Mammary epithelial cell (primary cell): ENCODE measurements at regions of chr6 and their contacts with region 1.

Region 1: GRCh38 chr6:40819182-40819834 is 219.7 kb downstream of the UNC5CL start:
- DNase-seq: no peak
- H3K4me3 ChIP-seq: no peak overlapping the region
- H3K27ac ChIP-seq: no peak overlapping the region
- H3K4me1 ChIP-seq: no peaks in the 10 kb centered on the region
- H3K27me3 ChIP-seq: no peaks in the 10 kb centered on the region
- CTCF ChIP-seq: no peak

Region 2: DNA sequence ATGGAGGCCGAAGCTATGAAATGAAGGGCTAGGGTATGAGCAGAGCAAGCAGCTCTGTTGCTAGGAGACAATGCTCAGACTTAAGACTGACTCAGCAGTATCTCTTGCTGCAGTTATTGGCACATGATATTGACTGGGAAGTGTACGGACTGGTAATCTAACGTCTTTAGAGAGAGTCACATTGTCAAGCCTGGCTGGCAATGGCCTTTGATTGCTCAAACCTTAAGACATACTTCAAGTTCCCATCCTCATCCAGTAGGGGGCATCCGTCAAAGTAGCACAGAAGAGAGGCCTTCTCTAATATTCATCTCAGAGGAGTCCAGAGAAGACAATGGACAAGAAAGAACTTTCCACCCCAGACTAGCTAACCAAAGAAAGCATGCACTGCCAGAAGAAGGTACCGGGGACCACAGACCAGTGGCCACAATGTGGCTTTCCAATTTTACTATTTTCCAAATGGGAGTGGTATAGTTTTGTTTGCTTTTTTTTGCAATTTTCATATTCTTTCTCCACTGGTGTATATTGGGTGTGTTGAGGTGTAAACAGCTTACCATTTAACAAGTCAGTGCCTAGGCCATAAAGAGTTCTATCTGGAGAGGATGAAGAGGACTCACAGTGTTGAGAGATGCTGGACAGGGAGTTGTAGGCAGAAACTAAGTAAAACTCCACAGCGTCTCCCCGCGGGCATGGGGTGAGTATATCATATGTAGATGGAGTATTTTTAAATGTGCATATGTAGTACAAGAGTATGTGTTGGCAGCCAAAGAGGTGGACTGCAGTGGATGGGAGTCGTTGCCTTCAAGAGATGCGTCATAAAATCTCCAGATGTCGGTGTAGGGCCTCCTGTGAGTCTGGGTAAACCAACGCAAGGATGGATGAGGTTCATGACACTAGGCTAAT is 268.9 kb before region 1 on chr6:
- CTCF ChIA-PET with region 1: no interaction called
- dilution Hi-C with region 1: no loop called
- in situ Hi-C with region 1: no loop called
- intact Hi-C with region 1: loop called (anchors 1 kb)
- DNase-seq: peak; percentile 19
- H3K4me3 ChIP-seq: no peak overlapping the region
- H3K27ac ChIP-seq: no peak overlapping the region
- H3K4me1 ChIP-seq: no peaks in the 10 kb centered on the region
- H3K27me3 ChIP-seq: no peaks in the 10 kb centered on the region
- CTCF ChIP-seq: peak; percentile 72 to 77

Region 3: DNA sequence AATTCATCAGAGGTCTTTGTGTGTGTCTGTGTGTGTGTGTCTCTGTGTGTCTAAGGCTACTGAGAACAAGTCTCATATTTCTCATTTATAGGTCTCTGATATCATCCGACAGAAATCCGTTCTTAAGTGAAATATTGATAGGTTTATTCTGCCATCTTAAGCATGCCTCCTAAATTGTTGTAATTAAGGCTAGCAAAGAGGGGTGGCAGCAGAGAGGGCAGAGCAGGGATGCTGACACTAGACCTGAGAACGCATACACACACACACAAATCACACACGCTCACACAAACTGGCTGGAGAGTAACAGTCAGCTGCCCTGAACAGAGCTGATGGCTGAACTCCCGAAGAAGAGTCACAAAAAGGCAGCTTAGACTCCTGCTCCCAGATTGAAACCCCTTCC is 147.2 kb before region 1 on chr6:
- CTCF ChIA-PET with region 1: no interaction called
- dilution Hi-C with region 1: no loop called
- in situ Hi-C with region 1: no loop called
- intact Hi-C with region 1: loop called (anchors 10 kb)
- DNase-seq: no peak
- H3K4me3 ChIP-seq: no peak overlapping the region
- H3K27ac ChIP-seq: no peak overlapping the region
- H3K4me1 ChIP-seq: no peaks in the 10 kb centered on the region
- H3K27me3 ChIP-seq: no peaks in the 10 kb centered on the region
- CTCF ChIP-seq: peak in 1 of 2 donors; percentile 12

Region 4: GRCh38 chr6:40719671-40720374 is 99.5 kb before region 1 on chr6:
- CTCF ChIA-PET with region 1: no interaction called
- dilution Hi-C with region 1: no loop called
- in situ Hi-C with region 1: no loop called
- intact Hi-C with region 1: loop called (anchors 10 kb)
- DNase-seq: no peak
- H3K4me3 ChIP-seq: no peak overlapping the region
- H3K27ac ChIP-seq: no peak overlapping the region
- H3K4me1 ChIP-seq: no peaks in the 10 kb centered on the region
- H3K27me3 ChIP-seq: no peaks in the 10 kb centered on the region
- CTCF ChIP-seq: no peak

Region 5: GRCh38 chr6:40906759-40907158 is 87.5 kb after region 1 on chr6:
- CTCF ChIA-PET with region 1: no interaction called
- dilution Hi-C with region 1: no loop called
- in situ Hi-C with region 1: no loop called
- intact Hi-C with region 1: no loop called
- DNase-seq: peak; percentile 82
- H3K4me3 ChIP-seq: no peak overlapping the region
- H3K27ac ChIP-seq: peak overlapping the region; percentile 8
- H3K4me1 ChIP-seq: peaks cover 30% of the 10 kb centered on the region
- H3K27me3 ChIP-seq: no peaks in the 10 kb centered on the region
- CTCF ChIP-seq: no peak